Heart left ventricle (tissue), 16 donors: ENCODE measurements at regions of chr4 and their contacts with region 1.

Region 1: GRCh38 chr4:172830295-172830764 is 338.3 kb upstream of the GALNT7 start:
- DNase-seq: no peak
- ATAC-seq: no peak
- H3K4me3 ChIP-seq: no peak overlapping the region
- H3K27ac ChIP-seq: no peak overlapping the region
- H3K4me1 ChIP-seq: no peaks in the 10 kb centered on the region
- H3K27me3 ChIP-seq: peaks cover 0 to 9% (median 0%) of the 10 kb centered on the region in 9 donors
- CTCF ChIP-seq: peak in 11 of 12 donors; percentile 22 to 69 (median 57)
- POLR2A ChIP-seq: no peak

Region 2: DNA sequence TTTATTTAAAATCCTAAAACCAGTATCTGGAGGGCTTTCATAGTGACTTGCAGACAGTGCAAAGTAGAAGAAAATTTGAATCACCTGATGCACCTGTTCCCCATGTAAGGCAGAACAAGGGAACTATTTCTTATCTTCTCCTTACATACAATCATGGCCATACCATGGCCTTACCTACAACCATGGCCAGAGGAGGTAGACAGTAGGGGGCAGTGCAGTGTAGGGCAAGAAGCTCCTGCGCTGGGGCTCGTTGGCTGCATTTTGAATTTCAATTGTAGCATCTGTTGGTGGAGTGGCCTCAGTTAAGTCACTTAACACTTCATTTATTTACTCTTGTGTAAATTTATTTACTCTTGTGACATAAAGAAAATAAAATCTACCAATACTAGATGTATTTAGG is 984.1 kb before region 1 on chr4:
- intact Hi-C with region 1: loop called in 2 of 10 experiments (anchors 5 to 10 kb)
- DNase-seq: peak in 2 of 5 donors; percentile 7 to 25
- ATAC-seq: no peak
- H3K4me3 ChIP-seq: no peak overlapping the region
- H3K27ac ChIP-seq: no peak overlapping the region
- H3K4me1 ChIP-seq: no peaks in the 10 kb centered on the region
- H3K27me3 ChIP-seq: no peaks in the 10 kb centered on the region
- CTCF ChIP-seq: peak in 9 of 12 donors; percentile 13 to 41 (median 29)
- POLR2A ChIP-seq: no peak

Region 3: GRCh38 chr4:172698256-172698655 is 132.1 kb before region 1 on chr4:
- intact Hi-C with region 1: no loop called
- DNase-seq: no peak
- ATAC-seq: no peak
- H3K4me3 ChIP-seq: no peak overlapping the region
- H3K27ac ChIP-seq: no peak overlapping the region
- H3K4me1 ChIP-seq: no peaks in the 10 kb centered on the region
- H3K27me3 ChIP-seq: no peaks in the 10 kb centered on the region
- CTCF ChIP-seq: no peak
- POLR2A ChIP-seq: no peak

Region 4: GRCh38 chr4:172709376-172709775 is 121.0 kb before region 1 on chr4:
- intact Hi-C with region 1: no loop called
- DNase-seq: no peak
- ATAC-seq: no peak
- H3K4me3 ChIP-seq: no peak overlapping the region
- H3K27ac ChIP-seq: no peak overlapping the region
- H3K4me1 ChIP-seq: no peaks in the 10 kb centered on the region
- H3K27me3 ChIP-seq: no peaks in the 10 kb centered on the region
- CTCF ChIP-seq: no peak
- POLR2A ChIP-seq: no peak

Region 5: GRCh38 chr4:172865531-172866130 is 35.3 kb after region 1 on chr4:
- intact Hi-C with region 1: no loop called
- DNase-seq: no peak
- ATAC-seq: no peak
- H3K4me3 ChIP-seq: no peak overlapping the region
- H3K27ac ChIP-seq: no peak overlapping the region
- H3K4me1 ChIP-seq: no peaks in the 10 kb centered on the region
- H3K27me3 ChIP-seq: no peaks in the 10 kb centered on the region
- CTCF ChIP-seq: no peak
- POLR2A ChIP-seq: no peak

Region 6: GRCh38 chr4:172881645-172882044 is 51.3 kb after region 1 on chr4:
- intact Hi-C with region 1: loop called in 1 of 10 experiments (anchors 5 kb)
- DNase-seq: no peak
- ATAC-seq: no peak
- H3K4me3 ChIP-seq: no peak overlapping the region
- H3K27ac ChIP-seq: no peak overlapping the region
- H3K4me1 ChIP-seq: no peaks in the 10 kb centered on the region
- H3K27me3 ChIP-seq: no peaks in the 10 kb centered on the region
- CTCF ChIP-seq: no peak
- POLR2A ChIP-seq: no peak

Region 7: GRCh38 chr4:173121076-173121561 is 290.8 kb after region 1 on chr4:
- intact Hi-C with region 1: no loop called
- DNase-seq: peak in 1 of 5 donors; percentile 25
- ATAC-seq: peak in 3 of 4 donors; percentile 49 to 87 (median 59)
- H3K4me3 ChIP-seq: no peak overlapping the region
- H3K27ac ChIP-seq: peak overlapping the region in 1 of 12 donors; percentile 13
- H3K4me1 ChIP-seq: peaks cover 0 to 11% (median 0%) of the 10 kb centered on the region in 12 donors
- H3K27me3 ChIP-seq: no peaks in the 10 kb centered on the region
- CTCF ChIP-seq: no peak
- POLR2A ChIP-seq: no peak